IMR-90 (cell line): ENCODE measurements at regions of chr2 and their contacts with region 1.

Region 1: GRCh38 chr2:189559579-189560272 is 20.9 kb downstream of the SLC40A1 start:
- DNase-seq: no peak
- ATAC-seq: peak; percentile 72
- H3K4me3 ChIP-seq: no peak overlapping the region
- H3K27ac ChIP-seq: peak overlapping the region; percentile 29; the same call in 1 of the 2 replicates
- H3K4me1 ChIP-seq: peaks cover 6% of the 10 kb centered on the region; the same call in 1 of the 2 replicates
- H3K27me3 ChIP-seq: no peaks in the 10 kb centered on the region
- CTCF ChIP-seq: no peak
- POLR2A ChIP-seq: no peak
- RAD21 ChIP-seq: no peak

Region 2: GRCh38 chr2:189164746-189165145 is 395.0 kb before region 1 on chr2:
- CTCF ChIA-PET with region 1: no interaction called
- POLR2A ChIA-PET with region 1: no interaction called
- dilution Hi-C with region 1: no loop called
- in situ Hi-C with region 1: no loop called
- intact Hi-C with region 1: no loop called
- DNase-seq: peak; percentile 80
- ATAC-seq: peak; percentile 33
- H3K4me3 ChIP-seq: no peak overlapping the region
- H3K27ac ChIP-seq: no peak overlapping the region
- H3K4me1 ChIP-seq: peaks cover 21% of the 10 kb centered on the region
- H3K27me3 ChIP-seq: no peaks in the 10 kb centered on the region
- CTCF ChIP-seq: no peak
- POLR2A ChIP-seq: no peak
- RAD21 ChIP-seq: no peak

Region 3: GRCh38 chr2:189179570-189179950 is 380.2 kb before region 1 on chr2 and contains the start of gene COL5A2:
- CTCF ChIA-PET with region 1: no interaction called
- POLR2A ChIA-PET with region 1: no interaction called
- dilution Hi-C with region 1: no loop called
- in situ Hi-C with region 1: no loop called
- intact Hi-C with region 1: no loop called
- DNase-seq: peak; percentile 91
- ATAC-seq: peak; percentile 79
- H3K4me3 ChIP-seq: peak within 1 kb of the TSS; percentile 96
- H3K27ac ChIP-seq: peak within 1 kb of the TSS; percentile 87
- H3K4me1 ChIP-seq: peaks cover 2% of the 10 kb centered on the region; the same call in 1 of the 2 replicates
- H3K27me3 ChIP-seq: no peaks in the 10 kb centered on the region
- CTCF ChIP-seq: no peak
- POLR2A ChIP-seq: peak; percentile 80
- RAD21 ChIP-seq: peak; percentile 41
- total RNA-seq, gene COL5A2: 235 and 257 TPM in 2 replicates

Region 4: DNA sequence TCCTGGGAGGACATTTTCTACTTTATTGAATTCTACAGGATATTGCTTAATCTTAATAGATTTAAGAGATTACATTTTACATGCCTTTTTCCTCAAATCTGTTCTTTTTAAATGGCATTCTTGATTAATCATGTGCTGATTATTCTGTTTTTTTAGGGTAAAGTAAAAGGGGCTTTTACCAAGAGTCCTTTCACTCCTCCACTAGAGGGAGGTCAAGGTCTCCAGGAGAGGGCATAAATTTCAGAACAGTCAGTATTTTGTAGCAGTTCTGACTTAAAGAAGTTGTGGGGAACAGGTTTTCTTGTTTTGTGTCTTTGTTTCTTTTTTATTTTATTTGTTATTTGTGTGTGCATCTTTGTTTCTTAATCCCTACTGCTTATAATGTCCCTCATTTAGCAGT is 93.1 kb before region 1 on chr2:
- CTCF ChIA-PET with region 1: no interaction called
- POLR2A ChIA-PET with region 1: no interaction called
- dilution Hi-C with region 1: no loop called
- in situ Hi-C with region 1: no loop called
- intact Hi-C with region 1: loop called (anchors 5 kb)
- DNase-seq: peak; percentile 50
- ATAC-seq: peak; percentile 73
- H3K4me3 ChIP-seq: no peak overlapping the region
- H3K27ac ChIP-seq: no peak overlapping the region
- H3K4me1 ChIP-seq: no peaks in the 10 kb centered on the region
- H3K27me3 ChIP-seq: no peaks in the 10 kb centered on the region
- CTCF ChIP-seq: peak; percentile 61
- POLR2A ChIP-seq: no peak
- RAD21 ChIP-seq: peak; percentile 61

Region 5: GRCh38 chr2:190043441-190043840 is 483.7 kb after region 1 on chr2:
- CTCF ChIA-PET with region 1: no interaction called
- POLR2A ChIA-PET with region 1: no interaction called
- dilution Hi-C with region 1: no loop called
- in situ Hi-C with region 1: no loop called
- intact Hi-C with region 1: no loop called
- DNase-seq: peak; percentile 14
- ATAC-seq: no peak
- H3K4me3 ChIP-seq: no peak overlapping the region
- H3K27ac ChIP-seq: no peak overlapping the region
- H3K4me1 ChIP-seq: no peaks in the 10 kb centered on the region
- H3K27me3 ChIP-seq: peaks cover 2% of the 10 kb centered on the region
- CTCF ChIP-seq: no peak
- POLR2A ChIP-seq: no peak
- RAD21 ChIP-seq: no peak